GM12878 (cell line): ENCODE measurements at regions of chr2 and their contacts with region 1.

Region 1: GRCh38 chr2:100381240-100381639 is 36.2 kb downstream of the CHST10 start:
- DNase-seq: peak; percentile 60
- ATAC-seq: peak; percentile 97
- H3K4me3 ChIP-seq: no peak overlapping the region
- H3K27ac ChIP-seq: no peak overlapping the region
- H3K4me1 ChIP-seq: no peaks in the 10 kb centered on the region; the same call in 1 of the 2 replicates
- H3K27me3 ChIP-seq: no peaks in the 10 kb centered on the region; a peak in 1 of 4 replicates
- CTCF ChIP-seq: peak; percentile 85 to 90 (median 89)
- EP300 ChIP-seq: no peak
- POLR2A ChIP-seq: no peak
- RAD21 ChIP-seq: peak; percentile 85

Region 2: GRCh38 chr2:99572373-99573164 is 808.7 kb before region 1 on chr2:
- CTCF ChIA-PET with region 1: no interaction called
- POLR2A ChIA-PET with region 1: no interaction called
- RAD21 ChIA-PET with region 1: no interaction called
- SMC1A ChIA-PET with region 1: no interaction called
- in situ Hi-C with region 1: loop called (anchors 10 kb)
- intact Hi-C with region 1: no loop called
- DNase-seq: no peak
- ATAC-seq: no peak
- H3K4me3 ChIP-seq: no peak overlapping the region
- H3K27ac ChIP-seq: no peak overlapping the region
- H3K4me1 ChIP-seq: no peaks in the 10 kb centered on the region
- H3K27me3 ChIP-seq: no peaks in the 10 kb centered on the region; a peak in 2 of 4 replicates
- CTCF ChIP-seq: no peak
- EP300 ChIP-seq: no peak
- POLR2A ChIP-seq: no peak
- RAD21 ChIP-seq: no peak

Region 3: GRCh38 chr2:100365434-100365833 is 15.8 kb before region 1 on chr2:
- CTCF ChIA-PET with region 1: interaction called, 15 read pairs
- POLR2A ChIA-PET with region 1: no interaction called
- RAD21 ChIA-PET with region 1: interaction called, 4 read pairs
- SMC1A ChIA-PET with region 1: interaction called, 8 read pairs
- in situ Hi-C with region 1: no loop called
- intact Hi-C with region 1: no loop called
- DNase-seq: no peak
- ATAC-seq: no peak
- H3K4me3 ChIP-seq: no peak overlapping the region
- H3K27ac ChIP-seq: no peak overlapping the region
- H3K4me1 ChIP-seq: no peaks in the 10 kb centered on the region
- H3K27me3 ChIP-seq: no peaks in the 10 kb centered on the region
- CTCF ChIP-seq: no peak
- EP300 ChIP-seq: no peak
- POLR2A ChIP-seq: no peak
- RAD21 ChIP-seq: no peak